IMR-90 (cell line): ENCODE measurements at regions of chr11 and their contacts with region 1.

Region 1: DNA sequence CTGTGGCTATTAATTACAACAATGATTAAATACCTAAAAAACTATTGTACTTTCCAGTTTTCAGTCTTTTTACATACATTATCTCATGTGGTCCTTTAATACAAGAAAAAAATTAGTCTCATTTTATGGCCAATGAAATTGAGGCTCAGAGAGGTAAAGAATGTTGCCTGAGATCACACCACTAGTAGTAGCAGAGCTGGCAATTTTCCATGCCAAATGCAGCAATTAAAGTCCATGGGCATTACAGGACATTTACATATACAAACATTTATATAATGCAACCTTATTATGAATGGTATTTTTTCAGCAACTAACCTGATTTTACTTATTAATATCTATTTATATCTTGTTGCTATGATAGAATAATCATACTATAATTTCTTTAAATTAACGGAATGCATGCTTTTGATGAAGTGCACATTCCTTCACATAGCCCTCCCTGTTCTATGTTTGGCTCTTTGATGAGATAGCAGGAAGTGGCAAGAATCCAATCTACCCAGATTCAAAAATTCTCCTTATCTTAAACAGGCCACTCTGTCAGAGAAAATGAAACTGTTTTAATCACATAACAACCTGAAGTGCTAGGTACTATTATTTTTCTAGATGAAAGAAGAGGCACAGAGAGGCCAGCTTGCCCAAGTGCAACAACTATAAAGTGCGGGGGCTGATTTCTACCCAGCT is 120.9 kb upstream of the LDLRAD3 start:
- DNase-seq: peak; percentile 13
- ATAC-seq: no peak
- H3K4me3 ChIP-seq: no peak overlapping the region
- H3K27ac ChIP-seq: no peak overlapping the region
- H3K4me1 ChIP-seq: peaks cover 2% of the 10 kb centered on the region; the same call in 1 of the 2 replicates
- H3K27me3 ChIP-seq: no peaks in the 10 kb centered on the region
- CTCF ChIP-seq: no peak
- POLR2A ChIP-seq: no peak
- RAD21 ChIP-seq: no peak

Region 2: GRCh38 chr11:35794850-35795249 is 28.1 kb before region 1 on chr11:
- CTCF ChIA-PET with region 1: interaction called, 16 read pairs
- POLR2A ChIA-PET with region 1: no interaction called
- dilution Hi-C with region 1: no loop called
- in situ Hi-C with region 1: no loop called
- intact Hi-C with region 1: no loop called
- DNase-seq: peak; percentile 88
- ATAC-seq: peak; percentile 73
- H3K4me3 ChIP-seq: no peak overlapping the region
- H3K27ac ChIP-seq: no peak overlapping the region
- H3K4me1 ChIP-seq: peaks cover 15% of the 10 kb centered on the region
- H3K27me3 ChIP-seq: no peaks in the 10 kb centered on the region
- CTCF ChIP-seq: no peak
- POLR2A ChIP-seq: no peak
- RAD21 ChIP-seq: no peak

Region 3: GRCh38 chr11:36034551-36035331 is 211.8 kb after region 1 on chr11:
- CTCF ChIA-PET with region 1: interaction called, 8 read pairs
- POLR2A ChIA-PET with region 1: no interaction called
- dilution Hi-C with region 1: no loop called
- in situ Hi-C with region 1: no loop called
- intact Hi-C with region 1: loop called (anchors 10 kb)
- DNase-seq: peak; percentile 90
- ATAC-seq: peak; percentile 90
- H3K4me3 ChIP-seq: no peak overlapping the region
- H3K27ac ChIP-seq: no peak overlapping the region; the same call in 1 of the 2 replicates
- H3K4me1 ChIP-seq: peaks cover 25% of the 10 kb centered on the region
- H3K27me3 ChIP-seq: no peaks in the 10 kb centered on the region
- CTCF ChIP-seq: no peak
- POLR2A ChIP-seq: no peak
- RAD21 ChIP-seq: peak; percentile 40

Region 4: GRCh38 chr11:36131721-36132397 is 308.9 kb after region 1 on chr11:
- CTCF ChIA-PET with region 1: interaction called, 28 read pairs
- POLR2A ChIA-PET with region 1: no interaction called
- dilution Hi-C with region 1: no loop called
- in situ Hi-C with region 1: no loop called
- intact Hi-C with region 1: loop called (anchors 1 kb)
- DNase-seq: peak; percentile 63
- ATAC-seq: peak; percentile 81
- H3K4me3 ChIP-seq: no peak overlapping the region
- H3K27ac ChIP-seq: no peak overlapping the region
- H3K4me1 ChIP-seq: peaks cover 2% of the 10 kb centered on the region
- H3K27me3 ChIP-seq: no peaks in the 10 kb centered on the region
- CTCF ChIP-seq: peak; percentile 72
- POLR2A ChIP-seq: no peak
- RAD21 ChIP-seq: peak; percentile 66

Region 5: GRCh38 chr11:36258730-36259360 is 435.9 kb after region 1 on chr11:
- CTCF ChIA-PET with region 1: interaction called, 11 read pairs
- POLR2A ChIA-PET with region 1: no interaction called
- dilution Hi-C with region 1: no loop called
- in situ Hi-C with region 1: loop called (anchors 5 kb)
- intact Hi-C with region 1: loop called (anchors 1 kb)
- DNase-seq: peak; percentile 77
- ATAC-seq: peak; percentile 94
- H3K4me3 ChIP-seq: no peak overlapping the region
- H3K27ac ChIP-seq: no peak overlapping the region
- H3K4me1 ChIP-seq: no peaks in the 10 kb centered on the region
- H3K27me3 ChIP-seq: peaks cover 35% of the 10 kb centered on the region
- CTCF ChIP-seq: peak; percentile 79
- POLR2A ChIP-seq: no peak
- RAD21 ChIP-seq: peak; percentile 84